Activated CD4-positive, alpha-beta T cell treated with anti-CD3 and anti-CD28 coated beads for 36 hours (primary cell): ENCODE measurements at regions of chr6 and their contacts with region 1.

Region 1: GRCh38 chr6:153947808-153948447 is 91.1 kb upstream of the OPRM1 start:
- DNase-seq: peak; percentile 14
- ATAC-seq: no peak
- H3K4me3 Mint-ChIP-seq: no peak overlapping the region
- H3K27ac Mint-ChIP-seq: no peak overlapping the region
- H3K4me1 Mint-ChIP-seq: no peaks in the 10 kb centered on the region
- H3K27me3 Mint-ChIP-seq: peaks cover 2% of the 10 kb centered on the region

Region 2: GRCh38 chr6:153503810-153504209 is 444.1 kb before region 1 on chr6:
- CTCF ChIA-PET with region 1: no interaction called
- POLR2A ChIA-PET with region 1: no interaction called
- intact Hi-C with region 1: loop called in 1 of 2 experiments (anchors 10 kb)
- DNase-seq: peak; percentile 6
- ATAC-seq: no peak
- H3K4me3 Mint-ChIP-seq: no peak overlapping the region
- H3K27ac Mint-ChIP-seq: no peak overlapping the region
- H3K4me1 Mint-ChIP-seq: no peaks in the 10 kb centered on the region
- H3K27me3 Mint-ChIP-seq: no peaks in the 10 kb centered on the region

Region 3: DNA sequence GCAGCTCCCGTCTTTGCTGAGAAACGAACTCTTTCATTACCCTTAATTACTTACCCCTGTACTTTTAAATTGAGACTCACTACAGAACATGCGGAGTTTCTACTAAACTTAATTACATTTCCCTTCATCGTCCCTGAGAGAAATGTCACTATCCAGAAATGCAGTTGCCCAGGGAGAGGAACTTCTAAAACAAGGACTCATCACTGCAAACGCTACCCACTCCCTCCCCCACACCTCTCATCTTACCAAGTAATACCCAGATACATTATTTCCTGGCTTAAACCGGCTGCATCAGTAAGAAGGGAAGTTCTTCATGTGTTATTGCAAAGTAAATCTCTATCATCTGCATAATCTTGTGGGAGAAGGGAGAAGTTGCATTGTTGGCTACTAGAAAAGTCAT is 270.4 kb after region 1 on chr6:
- CTCF ChIA-PET with region 1: no interaction called
- POLR2A ChIA-PET with region 1: no interaction called
- intact Hi-C with region 1: no loop called
- DNase-seq: peak; percentile 63
- ATAC-seq: peak; percentile 90
- H3K4me3 Mint-ChIP-seq: peak overlapping the region; percentile 48
- H3K27ac Mint-ChIP-seq: peak overlapping the region; percentile 88
- H3K4me1 Mint-ChIP-seq: peaks cover 55% of the 10 kb centered on the region
- H3K27me3 Mint-ChIP-seq: no peaks in the 10 kb centered on the region